Esophagus muscularis mucosa (tissue), 4 donors: ENCODE measurements at regions of chr4 and their contacts with region 1.

Region 1: DNA sequence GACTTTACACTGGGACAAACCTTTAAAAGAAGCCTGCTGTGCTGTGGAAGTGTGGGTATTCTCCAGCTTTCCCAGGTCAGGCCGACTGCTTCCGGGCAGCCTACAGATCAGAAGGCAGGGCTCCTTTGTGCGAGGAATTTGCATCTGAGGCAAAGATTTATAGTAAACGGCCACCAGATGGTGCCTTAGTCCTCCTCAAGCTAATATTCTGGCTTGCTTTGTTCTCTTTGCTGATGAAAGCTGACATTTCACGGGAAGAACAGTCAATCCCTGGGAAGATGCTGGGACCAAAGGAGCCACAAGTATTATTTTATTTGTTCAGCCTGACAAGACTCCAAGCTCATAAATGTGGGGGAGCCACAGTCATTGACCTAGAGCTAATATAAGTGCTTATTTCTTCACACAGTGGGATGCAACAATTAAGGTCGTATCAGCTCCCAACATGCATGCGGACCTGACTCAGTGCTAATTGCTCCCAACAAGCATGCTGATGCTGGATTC is 120.7 kb upstream of the TRIM2 start:
- DNase-seq: no peak
- H3K4me3 ChIP-seq: no peak overlapping the region
- H3K27ac ChIP-seq: no peak overlapping the region
- H3K4me1 ChIP-seq: peaks cover 5 to 20% (median 13%) of the 10 kb centered on the region in 4 donors
- H3K27me3 ChIP-seq: no peaks in the 10 kb centered on the region
- CTCF ChIP-seq: peak; percentile 59 to 68 (median 64)
- EP300 ChIP-seq: no peak
- POLR2A ChIP-seq: no peak

Region 2: GRCh38 chr4:152843481-152844090 is 239.9 kb before region 1 on chr4:
- intact Hi-C with region 1: loop called (anchors 2 kb)
- DNase-seq: no peak
- H3K4me3 ChIP-seq: no peak overlapping the region
- H3K27ac ChIP-seq: no peak overlapping the region
- H3K4me1 ChIP-seq: peaks cover 0 to 6% (median 0%) of the 10 kb centered on the region in 4 donors
- H3K27me3 ChIP-seq: no peaks in the 10 kb centered on the region
- CTCF ChIP-seq: no peak
- EP300 ChIP-seq: no peak
- POLR2A ChIP-seq: no peak

Region 3: DNA sequence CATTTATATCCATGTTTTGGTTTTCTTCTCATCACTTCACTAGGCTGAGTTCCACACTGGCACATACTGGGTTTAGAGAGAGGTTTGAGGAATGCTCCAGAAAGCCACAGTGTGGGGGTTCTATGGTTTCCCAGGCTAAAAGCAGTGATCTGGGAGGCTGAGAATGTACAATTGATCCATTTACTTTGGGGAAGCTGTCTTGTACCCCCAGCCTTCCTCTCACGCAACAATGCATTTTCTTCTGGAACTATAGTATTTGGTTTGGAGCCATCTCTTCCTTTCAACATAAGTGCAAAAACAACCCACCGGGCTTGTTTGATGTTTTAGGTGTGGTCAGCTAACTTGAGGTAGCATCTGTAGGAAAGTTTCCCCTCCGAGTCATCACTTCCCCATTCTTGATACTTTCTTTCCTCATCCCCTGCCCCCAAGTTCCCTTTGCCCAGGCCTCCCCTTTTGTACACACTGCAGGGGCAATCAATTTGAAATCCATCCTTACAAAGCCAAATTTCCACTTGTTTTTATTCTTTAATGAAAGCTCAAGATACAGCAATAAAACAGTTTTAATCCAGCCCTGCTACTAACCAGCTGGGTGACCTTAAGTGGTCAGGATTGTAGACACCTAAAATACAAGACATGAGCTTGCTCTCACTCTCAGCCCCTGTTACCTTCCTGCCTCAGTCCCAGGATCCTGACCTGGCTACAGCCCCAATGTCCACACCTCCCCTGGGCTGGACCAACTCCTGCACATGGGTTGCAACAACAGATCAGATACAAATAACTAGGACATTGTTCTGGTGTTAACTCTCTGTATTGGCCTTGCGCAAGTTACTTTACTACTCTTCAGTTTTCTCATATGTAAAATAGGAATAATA is 38.1 kb before region 1 on chr4:
- intact Hi-C with region 1: no loop called
- DNase-seq: peak; percentile 74
- H3K4me3 ChIP-seq: no peak overlapping the region
- H3K27ac ChIP-seq: no peak overlapping the region
- H3K4me1 ChIP-seq: no peaks in the 10 kb centered on the region
- H3K27me3 ChIP-seq: no peaks in the 10 kb centered on the region
- CTCF ChIP-seq: no peak
- EP300 ChIP-seq: no peak
- POLR2A ChIP-seq: no peak

Region 4: GRCh38 chr4:153318696-153319320 is 235.3 kb after region 1 on chr4:
- intact Hi-C with region 1: no loop called
- DNase-seq: no peak
- H3K4me3 ChIP-seq: no peak overlapping the region
- H3K27ac ChIP-seq: no peak overlapping the region
- H3K4me1 ChIP-seq: no peaks in the 10 kb centered on the region
- H3K27me3 ChIP-seq: no peaks in the 10 kb centered on the region
- CTCF ChIP-seq: peak; percentile 66 to 80 (median 76)
- EP300 ChIP-seq: no peak
- POLR2A ChIP-seq: no peak

Region 5: GRCh38 chr4:153409412-153409811 is 325.9 kb after region 1 on chr4:
- intact Hi-C with region 1: no loop called
- DNase-seq: no peak
- H3K4me3 ChIP-seq: no peak overlapping the region
- H3K27ac ChIP-seq: no peak overlapping the region
- H3K4me1 ChIP-seq: peaks cover 5 to 14% (median 13%) of the 10 kb centered on the region in 4 donors
- H3K27me3 ChIP-seq: no peaks in the 10 kb centered on the region
- CTCF ChIP-seq: no peak
- EP300 ChIP-seq: no peak
- POLR2A ChIP-seq: no peak